ENCODE measurements at regions of chr9 and their contacts with region 1.

Region 1: GRCh38 chr9:69056191-69056815 is 20.8 kb downstream of the FXN start:
- DNase-seq: no peak
- ATAC-seq: no peak
- H3K4me3 Mint-ChIP-seq: no peak overlapping the region
- H3K27ac Mint-ChIP-seq: no peak overlapping the region
- H3K4me1 Mint-ChIP-seq: no peaks in the 10 kb centered on the region
- H3K27me3 Mint-ChIP-seq: no peaks in the 10 kb centered on the region

Region 2: GRCh38 chr9:69186841-69187611 is 130.7 kb after region 1 on chr9:
- CTCF ChIA-PET with region 1: interaction called, 139 read pairs
- POLR2A ChIA-PET with region 1: no interaction called
- intact Hi-C with region 1: no loop called
- DNase-seq: no peak
- ATAC-seq: no peak
- H3K4me3 Mint-ChIP-seq: no peak overlapping the region
- H3K27ac Mint-ChIP-seq: no peak overlapping the region
- H3K4me1 Mint-ChIP-seq: peaks cover 21% of the 10 kb centered on the region
- H3K27me3 Mint-ChIP-seq: no peaks in the 10 kb centered on the region

Region 3: DNA sequence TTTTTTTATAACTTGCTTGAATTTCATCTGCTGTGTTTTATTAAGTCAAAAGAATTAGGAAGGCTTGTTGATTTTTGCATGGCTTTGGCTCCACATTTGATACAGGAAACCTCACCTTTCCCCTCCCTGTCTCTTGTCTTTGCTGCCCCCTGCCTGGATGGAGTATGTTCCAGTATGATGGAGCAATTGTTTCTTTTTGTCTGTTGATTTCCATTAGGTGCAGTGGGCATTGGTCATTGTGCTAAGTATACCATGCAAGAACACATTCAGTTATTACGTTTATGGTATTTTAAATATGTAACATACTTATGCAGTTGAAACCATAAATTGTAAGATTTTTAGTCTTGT is 137.4 kb after region 1 on chr9:
- CTCF ChIA-PET with region 1: interaction called, 139 read pairs
- POLR2A ChIA-PET with region 1: no interaction called
- intact Hi-C with region 1: loop called (anchors 1 kb)
- DNase-seq: no peak
- ATAC-seq: no peak
- H3K4me3 Mint-ChIP-seq: no peak overlapping the region
- H3K27ac Mint-ChIP-seq: no peak overlapping the region
- H3K4me1 Mint-ChIP-seq: peaks cover 8% of the 10 kb centered on the region
- H3K27me3 Mint-ChIP-seq: no peaks in the 10 kb centered on the region

Region 4: GRCh38 chr9:69199769-69200470 is 143.6 kb after region 1 on chr9:
- CTCF ChIA-PET with region 1: interaction called, 139 read pairs
- POLR2A ChIA-PET with region 1: no interaction called
- intact Hi-C with region 1: no loop called
- DNase-seq: no peak
- ATAC-seq: no peak
- H3K4me3 Mint-ChIP-seq: no peak overlapping the region
- H3K27ac Mint-ChIP-seq: no peak overlapping the region
- H3K4me1 Mint-ChIP-seq: peaks cover 10% of the 10 kb centered on the region
- H3K27me3 Mint-ChIP-seq: no peaks in the 10 kb centered on the region

Region 5: DNA sequence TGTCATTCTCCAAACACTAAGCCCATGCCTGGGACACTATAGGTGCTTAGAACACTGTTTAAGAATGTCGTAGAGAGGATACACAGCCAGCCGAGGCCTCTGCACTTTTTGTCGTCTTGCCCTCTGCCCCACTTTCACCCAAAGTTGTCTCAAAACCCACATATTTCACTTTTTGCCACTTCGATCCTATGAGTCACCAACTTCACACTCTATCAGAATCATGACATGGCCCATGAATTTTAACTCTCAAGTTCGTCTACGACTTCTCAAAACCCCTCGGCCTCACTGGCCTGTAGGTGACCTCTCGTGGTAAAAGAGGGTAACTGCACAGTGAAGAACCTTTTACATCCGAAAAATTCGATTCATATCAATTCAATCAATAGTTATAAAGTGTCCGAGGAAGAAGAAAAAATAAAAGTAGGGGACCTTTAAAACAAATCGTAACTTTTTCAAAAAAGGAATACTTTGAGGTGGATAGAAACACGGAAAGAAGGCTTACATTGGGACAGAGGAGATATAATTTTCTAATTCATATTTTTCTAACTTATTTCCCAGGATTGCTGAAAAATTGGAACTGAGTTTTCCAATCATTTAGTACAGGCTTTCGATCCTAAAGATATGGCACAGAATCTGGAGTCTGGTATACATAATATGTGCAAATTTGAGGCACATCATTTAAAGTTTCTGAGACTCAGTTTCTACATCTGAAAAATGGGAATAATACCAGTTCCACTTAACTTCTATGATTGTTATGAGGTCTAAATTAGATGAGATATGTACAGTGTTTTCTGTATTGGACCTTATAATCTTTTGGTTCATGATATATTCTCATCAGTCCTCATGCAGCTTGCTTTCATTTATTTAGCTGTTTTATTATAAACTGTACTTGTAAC is 493.3 kb after region 1 on chr9:
- CTCF ChIA-PET with region 1: no interaction called
- POLR2A ChIA-PET with region 1: no interaction called
- intact Hi-C with region 1: loop called in 1 of 2 experiments (anchors 1 kb)
- DNase-seq: peak; percentile 52
- ATAC-seq: peak; percentile 80
- H3K4me3 Mint-ChIP-seq: no peak overlapping the region
- H3K27ac Mint-ChIP-seq: no peak overlapping the region
- H3K4me1 Mint-ChIP-seq: peaks cover 5% of the 10 kb centered on the region
- H3K27me3 Mint-ChIP-seq: peaks cover 13% of the 10 kb centered on the region

Region 6: DNA sequence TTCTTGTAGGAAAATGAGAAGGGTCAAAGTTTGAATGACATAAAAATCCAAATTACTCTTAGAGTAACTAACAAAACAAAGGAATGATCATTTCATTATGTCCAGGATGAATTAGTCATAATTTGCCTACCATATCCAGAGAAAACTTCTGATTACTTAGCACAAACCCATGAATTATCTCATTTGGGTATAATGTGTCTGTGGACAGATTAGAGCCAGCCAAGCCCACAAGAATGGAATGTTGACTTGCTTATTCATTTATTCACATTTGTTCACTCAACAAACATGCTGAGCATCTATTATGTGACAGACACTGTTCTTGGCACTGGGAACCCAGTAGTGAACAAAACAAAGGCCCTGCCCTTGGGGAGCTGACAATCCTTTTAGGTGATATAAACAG is 528.5 kb after region 1 on chr9:
- CTCF ChIA-PET with region 1: no interaction called
- POLR2A ChIA-PET with region 1: no interaction called
- intact Hi-C with region 1: no loop called
- DNase-seq: no peak
- ATAC-seq: no peak
- H3K4me3 Mint-ChIP-seq: no peak overlapping the region
- H3K27ac Mint-ChIP-seq: no peak overlapping the region
- H3K4me1 Mint-ChIP-seq: no peaks in the 10 kb centered on the region
- H3K27me3 Mint-ChIP-seq: peaks cover 14% of the 10 kb centered on the region